CD4-positive, alpha-beta memory T cell (primary cell): ENCODE measurements at regions of chr12 and their contacts with region 1.

Region 1: GRCh38 chr12:122123051-122123760 is 44.6 kb downstream of the MLXIP start:
- DNase-seq: peak; percentile 63 to 72 (median 69)
- H3K4me3 ChIP-seq: no peak overlapping the region
- H3K4me3 Mint-ChIP-seq: peak overlapping the region in 3 of 8 donors; percentile 53 to 78 (median 73)
- H3K27ac ChIP-seq: no peak overlapping the region
- H3K27ac Mint-ChIP-seq: peak overlapping the region; percentile 3 to 88 (median 69)
- H3K4me1 ChIP-seq: peaks cover 19% of the 10 kb centered on the region
- H3K4me1 Mint-ChIP-seq: peaks cover 20 to 37% (median 23%) of the 10 kb centered on the region in 4 donors
- H3K27me3 ChIP-seq: no peaks in the 10 kb centered on the region
- H3K27me3 Mint-ChIP-seq: no peaks in the 10 kb centered on the region

Region 2: DNA sequence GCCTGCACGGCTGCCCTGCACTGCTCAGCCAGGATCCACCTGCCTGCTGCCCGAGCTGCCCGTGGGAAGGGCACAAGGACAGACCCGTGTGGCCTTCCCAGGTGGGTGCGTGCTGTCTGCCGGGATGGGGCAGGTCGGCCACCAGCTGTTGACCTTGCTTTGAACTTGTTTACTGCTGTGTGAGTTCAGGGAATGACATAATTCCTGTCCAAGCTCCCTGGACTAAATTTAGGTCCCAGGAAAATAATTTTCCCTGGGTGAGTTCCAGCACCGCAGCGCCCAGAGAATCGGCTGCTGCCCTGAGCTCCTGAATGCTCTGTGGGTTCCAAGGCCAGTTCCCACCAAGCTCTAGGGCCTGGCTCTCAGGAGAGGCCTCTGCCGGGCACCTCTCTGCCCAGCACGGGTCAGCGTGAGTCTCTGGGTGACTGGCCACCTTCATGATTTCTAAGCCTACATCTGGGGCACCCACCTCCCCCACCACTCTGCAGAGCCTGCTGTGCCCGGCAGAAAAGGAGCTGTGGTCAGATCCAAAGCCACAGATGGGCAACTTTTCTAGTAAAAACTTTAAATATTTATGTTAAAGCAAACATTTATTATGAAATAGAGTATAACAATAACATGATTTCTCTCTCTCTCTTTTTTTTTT is 71.9 kb before region 1 on chr12:
- CTCF ChIA-PET with region 1: interaction called, 186 read pairs
- POLR2A ChIA-PET with region 1: interaction called, 13 read pairs
- intact Hi-C with region 1: loop called (anchors 1 kb)
- DNase-seq: no peak
- H3K4me3 ChIP-seq: no peak overlapping the region
- H3K4me3 Mint-ChIP-seq: no peak overlapping the region
- H3K27ac ChIP-seq: no peak overlapping the region
- H3K27ac Mint-ChIP-seq: no peak overlapping the region
- H3K4me1 ChIP-seq: peaks cover 4% of the 10 kb centered on the region
- H3K4me1 Mint-ChIP-seq: peaks cover 0 to 7% (median 5%) of the 10 kb centered on the region in 4 donors
- H3K27me3 ChIP-seq: no peaks in the 10 kb centered on the region
- H3K27me3 Mint-ChIP-seq: no peaks in the 10 kb centered on the region

Region 3: DNA sequence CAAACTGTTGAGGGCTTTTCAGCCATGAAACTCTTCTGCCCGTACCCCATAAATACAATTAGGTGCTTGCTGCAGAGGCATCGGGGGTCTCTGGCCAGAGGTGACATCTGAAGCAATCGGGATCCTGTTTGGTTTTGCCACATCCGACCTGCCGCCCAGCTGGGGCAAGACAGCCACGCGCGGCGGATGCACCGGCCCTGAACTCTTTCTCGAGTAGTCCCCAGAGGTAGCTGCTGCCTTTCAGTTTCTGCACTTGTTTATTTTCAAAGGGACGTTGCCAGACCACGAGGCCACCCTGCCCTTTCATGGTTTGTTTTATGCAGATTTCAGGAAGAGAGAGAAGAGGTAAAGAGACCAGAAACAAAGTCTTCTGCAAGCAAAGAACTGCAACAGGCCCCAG is 55.2 kb before region 1 on chr12:
- CTCF ChIA-PET with region 1: interaction called, 33 read pairs
- POLR2A ChIA-PET with region 1: no interaction called
- intact Hi-C with region 1: no loop called
- DNase-seq: peak in 4 of 5 donors; percentile 15 to 32 (median 28)
- H3K4me3 ChIP-seq: no peak overlapping the region
- H3K4me3 Mint-ChIP-seq: peak overlapping the region in 7 of 8 donors; percentile 21 to 81 (median 72)
- H3K27ac ChIP-seq: no peak overlapping the region
- H3K27ac Mint-ChIP-seq: peak overlapping the region in 5 of 7 donors; percentile 4 to 84 (median 23)
- H3K4me1 ChIP-seq: peaks cover 10% of the 10 kb centered on the region
- H3K4me1 Mint-ChIP-seq: peaks cover 11 to 12% (median 11%) of the 10 kb centered on the region in 4 donors
- H3K27me3 ChIP-seq: no peaks in the 10 kb centered on the region
- H3K27me3 Mint-ChIP-seq: no peaks in the 10 kb centered on the region

Region 4: GRCh38 chr12:122148657-122149056 is 25.5 kb after region 1 on chr12:
- CTCF ChIA-PET with region 1: interaction called, 10 read pairs
- POLR2A ChIA-PET with region 1: no interaction called
- intact Hi-C with region 1: no loop called
- DNase-seq: no peak
- H3K4me3 ChIP-seq: no peak overlapping the region
- H3K4me3 Mint-ChIP-seq: no peak overlapping the region
- H3K27ac ChIP-seq: no peak overlapping the region
- H3K27ac Mint-ChIP-seq: peak overlapping the region in 2 of 7 donors; percentile 24 to 53
- H3K4me1 ChIP-seq: no peaks in the 10 kb centered on the region
- H3K4me1 Mint-ChIP-seq: peaks cover 0 to 5% (median under 1%) of the 10 kb centered on the region in 4 donors
- H3K27me3 ChIP-seq: no peaks in the 10 kb centered on the region
- H3K27me3 Mint-ChIP-seq: peaks cover 0 to 3% of the 10 kb centered on the region in 2 donors

Region 5: GRCh38 chr12:122297494-122297893 is 174.3 kb after region 1 on chr12:
- CTCF ChIA-PET with region 1: no interaction called
- POLR2A ChIA-PET with region 1: no interaction called
- intact Hi-C with region 1: no loop called
- DNase-seq: no peak
- H3K4me3 ChIP-seq: no peak overlapping the region
- H3K4me3 Mint-ChIP-seq: no peak overlapping the region
- H3K27ac ChIP-seq: no peak overlapping the region
- H3K27ac Mint-ChIP-seq: no peak overlapping the region
- H3K4me1 ChIP-seq: no peaks in the 10 kb centered on the region
- H3K4me1 Mint-ChIP-seq: peaks cover 0 to 2% (median under 1%) of the 10 kb centered on the region in 4 donors
- H3K27me3 ChIP-seq: no peaks in the 10 kb centered on the region
- H3K27me3 Mint-ChIP-seq: no peaks in the 10 kb centered on the region